PC-9 (cell line): ENCODE measurements at regions of chr4 and their contacts with region 1.

Region 1: DNA sequence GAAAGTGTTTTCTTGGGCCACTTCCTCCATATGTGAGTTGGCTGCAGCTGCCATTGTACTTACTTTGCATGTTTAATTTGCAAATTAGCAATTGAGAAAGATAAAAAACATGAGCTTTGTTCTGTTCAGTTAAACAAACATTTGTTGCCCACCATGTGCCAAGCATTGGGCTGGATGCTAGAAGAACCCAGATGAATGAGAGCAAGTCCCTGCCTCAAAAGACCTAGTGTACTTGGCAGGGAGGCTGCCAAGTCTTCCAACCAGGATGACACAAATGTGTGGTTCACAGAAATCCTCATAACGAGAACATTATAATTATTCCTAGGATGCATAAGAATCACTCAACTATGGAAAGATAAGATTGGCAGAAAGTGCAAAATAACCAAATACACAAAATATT is 66.7 kb downstream of the GPM6A start:
- DNase-seq: no peak
- H3K4me3 ChIP-seq: no peak overlapping the region
- H3K27ac ChIP-seq: no peak overlapping the region
- H3K4me1 ChIP-seq: no peaks in the 10 kb centered on the region
- H3K27me3 ChIP-seq: no peaks in the 10 kb centered on the region
- CTCF ChIP-seq: no peak

Region 2: DNA sequence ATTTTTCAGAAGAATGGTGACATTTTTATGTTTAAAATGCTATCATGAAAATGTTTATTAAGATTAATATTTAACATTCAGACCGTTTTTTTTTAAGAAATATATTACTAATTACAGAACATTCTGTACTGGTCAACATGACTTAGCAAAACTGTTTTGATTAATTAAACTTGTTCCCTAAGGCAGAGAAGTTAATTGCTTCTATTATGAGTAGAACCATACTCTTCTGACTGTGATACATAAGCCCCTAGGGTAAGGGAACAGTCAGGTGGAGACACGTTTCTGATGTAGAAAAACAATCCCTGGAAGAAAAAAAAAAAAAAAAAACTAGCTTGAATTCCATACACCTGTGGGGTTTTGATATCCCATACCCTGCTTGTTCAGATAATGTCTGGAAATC is 30.6 kb before region 1 on chr4:
- CTCF ChIA-PET with region 1: no interaction called
- POLR2A ChIA-PET with region 1: interaction called, 10 read pairs
- intact Hi-C with region 1: no loop called
- DNase-seq: no peak
- H3K4me3 ChIP-seq: no peak overlapping the region
- H3K27ac ChIP-seq: no peak overlapping the region
- H3K4me1 ChIP-seq: no peaks in the 10 kb centered on the region
- H3K27me3 ChIP-seq: no peaks in the 10 kb centered on the region
- CTCF ChIP-seq: no peak